ENCODE measurements at regions of chr12 and their contacts with region 1.

Region 1: DNA sequence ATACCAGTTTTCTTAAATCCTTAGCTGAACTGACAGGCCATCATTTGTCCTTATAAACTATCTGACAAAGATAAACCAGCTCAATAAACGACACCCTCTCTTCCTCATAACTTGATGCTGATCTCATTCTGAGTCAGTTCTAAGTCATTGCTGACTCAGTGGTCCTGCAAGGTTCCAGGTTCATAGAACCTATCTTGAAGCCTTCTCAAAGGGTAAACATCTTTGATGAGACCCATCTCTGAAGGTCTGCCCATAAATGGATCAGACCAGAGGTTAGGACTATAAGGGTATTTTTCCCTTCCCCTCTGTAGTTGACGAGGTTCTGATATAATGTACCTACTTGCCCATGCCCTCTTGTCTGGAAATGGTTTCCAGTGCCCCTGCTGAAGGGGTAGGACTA is 11.9 kb downstream of the NAA25 start:
- DNase-seq: no peak
- ATAC-seq: peak; percentile 37
- H3K4me3 Mint-ChIP-seq: no peak overlapping the region
- H3K27ac Mint-ChIP-seq: peak overlapping the region; percentile 75
- H3K4me1 Mint-ChIP-seq: peaks cover 24% of the 10 kb centered on the region
- H3K27me3 Mint-ChIP-seq: no peaks in the 10 kb centered on the region
- CTCF ChIP-seq: no peak

Region 2: DNA sequence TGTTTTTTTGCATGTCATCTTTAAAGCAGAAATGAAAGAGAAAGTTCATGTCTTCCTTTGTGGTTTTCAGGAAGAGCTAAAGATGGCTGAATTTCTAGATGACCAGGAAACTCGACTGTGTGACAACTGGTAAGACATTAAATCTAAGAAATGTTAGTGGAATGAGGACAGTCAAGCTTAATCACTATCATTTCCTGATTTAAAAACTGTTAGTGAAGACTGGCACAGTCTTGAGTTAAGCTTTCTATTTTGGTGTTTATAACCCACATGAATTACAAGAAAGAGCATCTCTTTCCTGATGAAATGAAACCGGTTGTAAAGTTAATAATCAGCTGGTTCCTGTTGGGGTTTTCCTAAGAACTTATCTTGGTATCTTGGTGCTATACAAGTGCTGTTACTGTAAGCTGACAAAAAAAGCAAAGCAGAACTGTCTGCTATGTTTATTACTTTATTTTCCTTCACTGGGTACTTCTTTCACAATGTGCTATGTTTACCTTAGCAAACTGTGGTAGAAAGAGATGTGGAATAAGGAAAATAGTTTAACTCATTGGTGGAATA is 33.9 kb after region 1 on chr12:
- CTCF ChIA-PET with region 1: no interaction called
- POLR2A ChIA-PET with region 1: interaction called, 22 read pairs
- intact Hi-C with region 1: loop called (anchors 2 kb)
- DNase-seq: no peak
- ATAC-seq: peak; percentile 67
- H3K4me3 Mint-ChIP-seq: peak overlapping the region; percentile 66
- H3K27ac Mint-ChIP-seq: peak overlapping the region; percentile 79
- H3K4me1 Mint-ChIP-seq: peaks cover 63% of the 10 kb centered on the region
- H3K27me3 Mint-ChIP-seq: no peaks in the 10 kb centered on the region
- CTCF ChIP-seq: no peak